Calu3 (cell line): ENCODE measurements at regions of chr1 and their contacts with region 1.

Region 1: GRCh38 chr1:151098126-151098525 is 27.6 kb downstream of the GABPB2 start:
- DNase-seq: no peak
- H3K4me3 Mint-ChIP-seq: no peak overlapping the region
- H3K27ac Mint-ChIP-seq: no peak overlapping the region
- H3K4me1 Mint-ChIP-seq: no peaks in the 10 kb centered on the region
- H3K27me3 Mint-ChIP-seq: no peaks in the 10 kb centered on the region
- CTCF ChIP-seq: no peak

Region 2: GRCh38 chr1:150881331-150882070 is 216.6 kb before region 1 on chr1:
- CTCF ChIA-PET with region 1: interaction called, 10 read pairs
- intact Hi-C with region 1: no loop called
- DNase-seq: no peak
- H3K4me3 Mint-ChIP-seq: no peak overlapping the region
- H3K27ac Mint-ChIP-seq: no peak overlapping the region
- H3K4me1 Mint-ChIP-seq: no peaks in the 10 kb centered on the region
- H3K27me3 Mint-ChIP-seq: no peaks in the 10 kb centered on the region
- CTCF ChIP-seq: no peak

Region 3: GRCh38 chr1:151024540-151025146 is 73.5 kb before region 1 on chr1:
- CTCF ChIA-PET with region 1: interaction called, 14 read pairs
- intact Hi-C with region 1: no loop called
- DNase-seq: peak; percentile 83
- H3K4me3 Mint-ChIP-seq: no peak overlapping the region
- H3K27ac Mint-ChIP-seq: no peak overlapping the region
- H3K4me1 Mint-ChIP-seq: no peaks in the 10 kb centered on the region
- H3K27me3 Mint-ChIP-seq: no peaks in the 10 kb centered on the region
- CTCF ChIP-seq: peak; percentile 69

Region 4: GRCh38 chr1:151156515-151156819 is 58.3 kb after region 1 on chr1 and contains the start of gene TNFAIP8L2:
- CTCF ChIA-PET with region 1: interaction called, 27 read pairs
- intact Hi-C with region 1: loop called (anchors 1 kb)
- DNase-seq: no peak
- H3K4me3 Mint-ChIP-seq: no peak within 1 kb of the TSS
- H3K27ac Mint-ChIP-seq: no peak within 1 kb of the TSS
- H3K4me1 Mint-ChIP-seq: no peaks in the 10 kb centered on the region
- H3K27me3 Mint-ChIP-seq: no peaks in the 10 kb centered on the region
- CTCF ChIP-seq: no peak
- total RNA-seq, gene TNFAIP8L2: not detected in 2 replicates

Region 5: DNA sequence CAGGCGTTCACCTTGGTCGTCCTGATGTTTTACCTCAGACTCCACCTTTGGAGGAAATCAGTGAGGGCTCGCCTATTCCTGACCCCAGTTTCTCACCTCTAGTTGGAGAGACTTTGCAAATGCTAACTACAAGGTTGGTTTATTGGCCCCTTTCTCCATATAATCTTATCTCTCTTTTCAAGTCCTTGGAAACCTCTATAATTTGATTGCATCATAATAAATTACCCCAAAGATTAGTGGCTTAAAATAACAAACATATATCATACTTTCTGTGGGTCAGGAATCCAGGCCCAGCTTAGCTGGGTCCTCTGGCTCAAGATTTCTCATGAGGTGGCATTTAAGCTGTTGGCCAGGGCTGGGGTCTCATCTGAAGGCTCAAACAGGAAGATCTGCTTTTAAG is 144.3 kb after region 1 on chr1:
- CTCF ChIA-PET with region 1: no interaction called
- intact Hi-C with region 1: no loop called
- DNase-seq: no peak
- H3K4me3 Mint-ChIP-seq: no peak overlapping the region
- H3K27ac Mint-ChIP-seq: no peak overlapping the region
- H3K4me1 Mint-ChIP-seq: no peaks in the 10 kb centered on the region
- H3K27me3 Mint-ChIP-seq: no peaks in the 10 kb centered on the region
- CTCF ChIP-seq: no peak

Region 6: DNA sequence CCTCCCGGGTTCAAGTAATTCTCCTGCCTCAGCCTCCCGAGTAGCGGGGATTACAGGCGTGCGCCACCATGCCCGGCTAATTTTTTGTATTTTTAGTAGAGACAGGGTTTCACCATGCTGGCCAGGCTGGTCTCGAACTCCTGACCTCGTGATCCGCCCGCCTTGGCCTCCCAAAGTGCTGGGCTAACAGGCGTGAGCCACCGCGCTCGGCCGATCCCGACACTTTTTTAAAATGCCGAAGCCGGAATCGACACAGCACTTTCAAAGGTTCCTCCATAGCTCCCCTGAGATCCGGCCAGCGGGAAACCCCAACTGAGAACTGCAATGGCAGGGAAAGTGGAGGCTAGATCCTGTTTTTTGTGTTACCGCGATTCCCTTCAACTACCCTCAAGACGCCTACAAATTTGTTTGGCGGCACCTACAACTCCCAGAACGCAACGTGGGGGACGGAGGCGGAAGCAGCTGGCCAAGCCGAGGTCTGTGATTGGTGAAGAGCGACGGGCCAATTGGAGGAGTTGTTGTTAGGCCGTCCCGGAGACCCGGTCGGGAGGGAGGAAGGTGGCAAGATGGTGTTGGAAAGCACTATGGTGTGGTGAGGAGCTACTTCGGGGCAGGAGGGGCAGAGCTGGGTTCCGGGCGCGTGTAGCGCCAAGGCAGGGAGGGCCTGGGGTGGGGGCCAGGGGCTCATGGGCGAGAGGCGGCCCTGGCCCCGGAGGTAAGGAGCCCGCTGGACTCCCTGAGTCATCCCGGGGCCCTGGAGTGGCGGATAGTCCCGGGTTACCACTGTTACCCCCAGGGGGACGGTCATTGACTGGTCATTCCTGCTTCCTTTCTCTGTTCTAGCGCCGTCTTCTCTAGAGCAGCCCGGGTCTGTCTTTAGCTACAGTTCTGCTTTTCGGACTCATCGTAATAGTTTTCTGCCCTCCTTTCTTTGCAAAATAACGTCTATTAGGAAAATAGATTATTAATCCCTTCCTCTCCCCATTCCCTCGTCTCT is 156.4 kb after region 1 on chr1 and contains the start of gene PSMD4:
- CTCF ChIA-PET with region 1: interaction called, 17 read pairs
- intact Hi-C with region 1: loop called (anchors 5 kb)
- DNase-seq: peak; percentile 97
- H3K4me3 Mint-ChIP-seq: peak within 1 kb of the TSS; percentile 93
- H3K27ac Mint-ChIP-seq: peak within 1 kb of the TSS; percentile 100
- H3K4me1 Mint-ChIP-seq: peaks cover 8% of the 10 kb centered on the region
- H3K27me3 Mint-ChIP-seq: no peaks in the 10 kb centered on the region
- CTCF ChIP-seq: no peak
- total RNA-seq, gene PSMD4: 302 and 325 TPM in 2 replicates

Region 7: DNA sequence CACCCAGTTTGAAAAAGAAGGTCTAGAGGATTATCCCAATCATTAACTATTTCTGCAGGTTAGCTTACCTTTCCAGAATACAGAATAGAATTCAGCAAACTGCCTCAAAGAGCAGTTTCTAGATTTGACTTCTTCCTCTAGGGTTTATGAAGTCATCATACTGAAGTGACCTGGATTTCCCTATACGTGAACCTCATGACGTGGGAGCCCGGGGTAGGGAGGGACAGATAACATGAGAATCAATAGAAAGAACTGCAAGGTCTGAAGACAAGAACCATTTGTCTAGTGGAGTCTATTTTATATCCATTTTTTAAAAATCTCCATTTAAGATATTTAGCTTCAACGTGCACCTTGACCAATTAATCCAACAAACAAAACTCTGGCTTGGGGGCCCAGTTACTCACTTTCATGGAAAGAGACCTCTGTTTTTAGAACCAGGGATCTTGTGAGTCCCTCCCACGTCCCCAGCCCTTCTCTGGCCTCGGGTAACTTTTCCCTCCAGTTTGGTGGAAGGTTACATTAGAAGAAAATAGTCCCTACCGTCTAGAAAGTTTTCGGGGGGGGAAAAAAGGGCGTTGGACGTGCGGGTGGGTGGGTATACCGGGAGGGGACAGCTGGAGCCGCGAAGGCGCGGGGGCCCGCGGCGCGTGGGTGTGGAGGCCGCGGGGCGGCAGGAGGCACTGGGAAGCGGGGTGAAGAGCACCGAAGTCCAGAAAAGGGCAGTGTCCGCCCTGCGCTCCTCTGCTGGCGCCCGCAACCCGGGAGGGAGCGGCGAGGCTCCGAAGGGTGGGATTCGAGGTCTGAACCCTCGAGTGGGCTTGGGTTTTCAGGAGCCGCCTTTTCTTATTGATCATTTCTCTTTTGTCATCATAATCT is 375.0 kb after region 1 on chr1:
- CTCF ChIA-PET with region 1: no interaction called
- intact Hi-C with region 1: no loop called
- DNase-seq: peak; percentile 48
- H3K4me3 Mint-ChIP-seq: peak overlapping the region; percentile 70
- H3K27ac Mint-ChIP-seq: peak overlapping the region; percentile 64
- H3K4me1 Mint-ChIP-seq: peaks cover 9% of the 10 kb centered on the region
- H3K27me3 Mint-ChIP-seq: no peaks in the 10 kb centered on the region
- CTCF ChIP-seq: no peak